ENCODE measurements at regions of chr1 and their contacts with region 1.

Region 1: DNA sequence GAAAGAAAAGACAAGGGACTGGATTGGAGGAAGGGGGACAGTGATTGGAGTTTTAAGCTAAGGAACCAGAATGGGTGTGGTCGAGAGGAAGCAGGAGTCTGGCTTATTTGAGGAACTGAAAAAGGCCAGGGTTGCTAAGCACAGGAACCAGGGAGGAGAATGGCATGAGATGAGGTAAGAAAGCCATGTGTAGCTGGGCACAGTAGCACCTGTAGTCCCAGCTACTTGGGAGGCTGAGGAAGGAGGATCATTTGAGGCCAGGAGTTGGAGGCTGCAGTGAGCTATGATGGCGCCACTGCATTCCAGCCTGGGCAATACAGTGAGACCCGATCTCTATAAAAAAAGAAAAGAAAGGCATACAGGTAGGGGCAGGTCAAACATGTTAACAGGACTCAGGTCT is 8.1 kb upstream of the KHDRBS1 start:
- DNase-seq: no peak
- H3K4me3 ChIP-seq: no peak overlapping the region
- H3K27me3 ChIP-seq: no peaks in the 10 kb centered on the region
- CTCF ChIP-seq: no peak

Region 2: DNA sequence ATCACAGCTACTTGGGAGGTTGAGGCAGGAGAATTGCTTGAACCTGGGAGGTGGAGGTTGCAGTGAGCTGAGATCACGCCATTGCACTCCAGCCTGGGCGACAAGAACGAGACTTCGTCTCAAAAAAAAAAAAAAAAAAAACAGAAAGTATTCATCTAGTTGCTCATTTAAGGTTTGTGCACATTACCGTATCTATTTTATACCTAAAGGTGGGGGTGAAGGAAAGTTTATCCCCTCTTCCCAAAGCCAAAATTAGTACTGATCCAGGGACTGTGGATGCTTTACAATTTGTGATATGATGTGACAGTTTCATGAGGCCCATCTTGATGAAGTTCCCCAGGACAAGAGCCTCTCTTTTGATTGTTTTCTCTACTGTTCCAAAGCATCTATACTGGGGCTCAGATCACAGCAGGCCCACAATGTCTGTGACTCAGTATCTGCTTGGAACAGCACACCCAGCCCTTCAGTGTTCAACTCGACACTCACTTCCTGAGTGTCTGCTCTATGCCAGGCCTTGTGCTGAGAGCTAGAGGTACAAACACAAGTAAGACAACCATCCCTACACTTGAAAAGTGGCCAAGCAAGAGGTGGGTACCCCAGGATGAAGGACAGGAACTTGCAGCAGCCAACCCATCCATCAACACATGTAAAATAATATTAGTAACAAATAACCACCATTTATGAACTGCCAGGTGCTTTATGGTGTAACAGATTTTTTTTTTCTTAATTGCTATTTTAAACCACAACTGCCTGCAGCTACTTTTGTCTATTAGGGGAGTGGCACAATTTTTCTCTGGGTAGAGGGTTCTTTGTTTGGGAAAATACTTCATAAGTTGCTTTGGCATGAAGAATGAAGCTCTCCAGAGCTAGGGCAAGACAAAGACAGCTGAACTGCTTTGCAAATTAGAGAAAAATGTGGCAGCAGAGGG is 20.8 kb before region 1 on chr1:
- CTCF ChIA-PET with region 1: interaction called, 41 read pairs
- POLR2A ChIA-PET with region 1: no interaction called
- DNase-seq: no peak
- H3K4me3 ChIP-seq: no peak overlapping the region
- H3K27me3 ChIP-seq: no peaks in the 10 kb centered on the region
- CTCF ChIP-seq: no peak

Region 3: DNA sequence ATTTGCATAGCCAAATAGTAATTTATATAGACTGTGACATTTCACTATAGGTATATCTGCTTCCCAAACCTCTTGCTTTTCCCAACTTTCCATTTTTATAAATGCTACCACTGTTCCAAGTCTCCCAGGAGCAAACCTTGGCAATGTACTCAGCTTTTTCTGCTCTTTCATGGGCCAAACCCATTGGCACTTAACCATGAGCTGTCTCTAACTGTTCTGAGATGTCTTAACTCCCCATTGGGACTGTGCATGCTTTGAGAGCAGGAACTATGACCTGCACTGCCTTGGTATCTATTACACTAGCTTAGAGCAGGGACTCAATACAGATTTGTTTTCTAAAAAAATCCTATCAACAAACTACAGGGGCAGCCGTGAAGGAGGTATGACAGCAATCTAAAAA is 14.3 kb before region 1 on chr1:
- CTCF ChIA-PET with region 1: interaction called, 41 read pairs
- POLR2A ChIA-PET with region 1: no interaction called
- DNase-seq: no peak
- H3K4me3 ChIP-seq: no peak overlapping the region
- H3K27me3 ChIP-seq: no peaks in the 10 kb centered on the region
- CTCF ChIP-seq: no peak

Region 4: DNA sequence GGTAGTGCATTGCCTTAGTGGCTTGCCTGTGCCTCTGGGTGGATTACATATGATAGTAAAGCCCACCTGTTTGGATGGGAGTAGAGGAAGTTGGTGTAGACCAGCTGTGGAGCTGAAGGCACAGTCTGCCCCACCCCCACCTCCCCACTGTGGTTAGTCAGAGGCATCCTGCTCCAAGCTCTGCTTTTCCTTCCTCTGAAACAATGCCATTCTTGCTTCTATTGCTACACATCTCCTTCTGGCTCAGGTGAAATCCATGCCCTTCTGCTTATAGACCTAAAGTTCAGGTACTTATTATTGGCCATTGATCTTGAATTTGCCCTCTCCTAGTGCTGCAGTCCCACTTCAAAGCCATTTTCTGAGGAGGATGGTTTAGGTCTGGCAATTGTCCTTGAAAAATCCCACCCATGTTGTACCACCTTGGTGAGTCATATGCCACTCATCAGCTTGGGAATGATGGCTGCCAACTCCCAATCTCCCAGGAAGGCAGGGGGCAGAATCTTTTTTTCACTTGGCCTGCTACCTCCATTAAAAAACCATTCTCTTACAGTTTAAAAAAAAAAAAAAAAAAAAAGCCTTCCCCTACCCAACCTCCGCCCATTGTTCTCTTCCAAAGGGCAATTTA is 167.2 kb after region 1 on chr1:
- CTCF ChIA-PET with region 1: no interaction called
- POLR2A ChIA-PET with region 1: no interaction called
- DNase-seq: no peak
- H3K4me3 ChIP-seq: no peak overlapping the region
- H3K27me3 ChIP-seq: no peaks in the 10 kb centered on the region
- CTCF ChIP-seq: no peak

Region 5: DNA sequence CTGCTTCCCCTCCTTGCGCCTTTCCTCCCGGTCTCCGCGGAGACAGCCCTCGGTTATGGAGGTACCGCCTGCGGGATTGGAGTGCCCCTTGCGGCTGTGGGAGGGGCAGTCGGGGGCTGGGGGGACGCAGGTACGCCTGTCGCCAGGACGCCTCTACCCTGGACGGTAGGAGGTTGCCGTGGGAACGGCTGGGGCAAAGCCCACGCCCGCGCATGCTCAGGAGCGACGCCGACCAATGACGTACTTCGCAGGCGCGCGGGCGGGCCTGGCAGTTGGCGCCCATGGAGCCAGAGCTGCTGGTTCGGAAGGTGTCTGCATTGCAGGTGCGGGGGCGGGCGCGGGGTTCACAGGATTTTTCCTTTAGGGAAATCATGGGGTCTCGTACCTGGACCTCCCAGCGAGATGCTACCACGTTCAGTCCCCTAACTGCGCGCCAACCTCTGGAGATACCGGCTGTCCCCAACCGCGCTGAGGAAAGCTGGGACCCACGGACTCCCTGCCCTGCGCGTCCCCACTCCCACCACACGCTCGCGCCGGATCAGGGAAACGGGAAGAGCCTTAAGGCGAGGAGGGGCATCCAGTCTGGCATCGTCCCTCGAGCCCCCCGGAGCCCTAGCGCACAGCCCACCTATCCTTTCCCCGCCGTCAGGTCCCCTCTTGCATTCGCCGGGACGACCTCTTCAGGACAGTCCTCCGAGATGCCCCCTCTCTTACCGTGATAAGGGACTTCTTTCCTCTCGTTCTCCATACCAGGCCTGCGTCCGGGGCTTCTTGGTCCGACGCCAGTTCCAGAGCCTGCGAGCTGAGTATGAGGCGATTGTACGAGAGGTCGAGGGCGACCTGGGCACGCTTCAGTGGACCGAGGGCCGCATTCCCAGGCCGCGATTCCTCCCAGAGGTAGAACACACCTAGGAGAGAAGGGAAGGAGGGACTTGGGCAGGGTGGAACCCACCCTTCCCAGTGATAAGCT is 200.2 kb after region 1 on chr1 and contains the start of gene IQCC:
- CTCF ChIA-PET with region 1: no interaction called
- POLR2A ChIA-PET with region 1: no interaction called
- DNase-seq: no peak
- H3K4me3 ChIP-seq: peak within 1 kb of the TSS; percentile 74
- H3K27me3 ChIP-seq: no peaks in the 10 kb centered on the region
- CTCF ChIP-seq: no peak
- polyA plus RNA-seq, gene IQCC: 1.4 and 2.1 TPM in 2 replicates